Activated CD8-positive, alpha-beta T cell treated with anti-CD3 and anti-CD28 coated beads for 36 hours (primary cell): ENCODE measurements at regions of chr1 and their contacts with region 1.

Region 1: DNA sequence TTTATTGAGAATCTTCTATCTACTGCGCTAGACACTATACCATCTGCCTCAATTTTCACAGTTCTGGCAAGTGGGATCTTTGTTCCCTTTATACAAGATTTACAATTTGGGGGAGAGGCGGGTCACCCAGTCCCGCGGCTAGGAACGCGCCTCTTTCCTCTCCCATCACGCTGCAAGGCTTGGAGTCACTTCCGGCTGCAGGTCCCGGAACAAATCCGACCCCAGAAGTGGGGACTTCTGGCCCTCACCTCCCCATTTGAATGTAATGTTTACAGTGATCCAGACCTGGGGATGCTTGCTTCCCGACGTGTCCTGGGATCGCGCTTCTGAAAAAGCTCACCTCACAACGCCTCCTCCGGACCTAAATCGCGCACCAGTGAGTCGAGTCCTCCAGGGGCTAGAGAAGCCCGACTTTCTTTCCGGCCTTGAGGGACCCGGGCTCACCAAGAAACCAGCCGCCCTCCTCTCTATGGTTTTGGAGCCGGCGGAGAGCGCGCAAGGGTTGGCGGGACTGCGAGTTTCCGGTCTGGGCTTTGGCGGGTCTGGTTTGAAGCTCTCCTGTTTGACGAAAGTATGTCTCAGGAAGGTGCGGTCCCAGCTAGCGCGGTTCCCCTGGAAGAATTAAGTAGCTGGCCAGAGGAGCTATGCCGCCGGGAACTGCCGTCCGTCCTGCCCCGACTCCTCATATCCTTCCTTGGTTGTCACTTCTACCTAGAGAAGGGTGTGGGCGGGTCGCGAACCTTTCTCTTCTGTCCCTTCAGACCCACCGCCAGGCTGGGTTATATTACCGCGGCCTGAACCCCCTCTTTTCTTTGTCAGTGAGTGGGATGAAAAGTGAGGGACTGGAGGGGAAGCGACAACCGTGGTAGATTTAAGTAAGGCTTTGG is at the start of gene METTL18:
- DNase-seq: peak; percentile 96
- ATAC-seq: peak; percentile 98
- H3K4me3 Mint-ChIP-seq: peak within 1 kb of the TSS; percentile 89
- H3K27ac Mint-ChIP-seq: peak within 1 kb of the TSS; percentile 98
- H3K4me1 Mint-ChIP-seq: peaks cover 45% of the 10 kb centered on the region
- H3K27me3 Mint-ChIP-seq: no peaks in the 10 kb centered on the region
- CTCF ChIP-seq: peak; percentile 49
- total RNA-seq, gene METTL18: 8.7 to 10.8 TPM

Region 2: DNA sequence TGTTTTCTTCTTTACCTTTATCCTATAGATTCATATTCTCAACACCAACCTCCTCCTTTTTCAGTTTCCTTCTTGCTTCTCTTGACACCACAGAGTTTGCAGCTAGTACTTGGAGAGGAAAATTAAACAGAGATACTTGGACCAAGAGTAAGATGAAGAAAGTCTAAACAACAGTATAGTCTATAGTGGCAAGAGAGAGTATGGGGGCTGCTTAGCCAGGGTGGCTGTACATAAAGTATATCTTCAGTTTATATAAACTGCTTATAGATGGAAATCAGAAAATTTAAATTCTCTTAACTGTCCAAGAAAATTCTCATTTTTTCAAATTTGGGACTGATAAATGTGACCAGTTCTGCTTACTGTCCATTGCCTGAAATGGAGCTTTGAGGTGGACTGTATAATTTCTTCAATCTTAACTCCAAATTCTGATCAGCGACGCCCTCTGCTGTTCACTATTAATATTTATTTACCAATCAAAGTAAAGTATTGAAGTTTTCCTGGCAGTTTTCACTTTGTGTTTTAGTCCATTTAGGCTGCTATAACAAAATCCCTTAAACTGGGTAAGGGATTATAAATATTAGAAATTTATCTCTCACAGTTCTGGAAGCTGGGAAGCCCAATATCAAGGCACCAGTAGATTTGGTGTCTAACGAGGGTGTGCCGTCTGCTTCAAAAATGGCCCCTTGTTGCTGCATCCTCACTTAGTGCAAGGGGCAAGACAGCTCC is 14.8 kb after region 1 on chr1:
- CTCF ChIA-PET with region 1: interaction called, 16 read pairs
- POLR2A ChIA-PET with region 1: interaction called, 3 read pairs
- intact Hi-C with region 1: no loop called
- DNase-seq: peak; percentile 31
- ATAC-seq: no peak
- H3K4me3 Mint-ChIP-seq: no peak overlapping the region
- H3K27ac Mint-ChIP-seq: no peak overlapping the region
- H3K4me1 Mint-ChIP-seq: no peaks in the 10 kb centered on the region
- H3K27me3 Mint-ChIP-seq: no peaks in the 10 kb centered on the region
- CTCF ChIP-seq: peak; percentile 68

Region 3: GRCh38 chr1:169893494-169894362 is 99.0 kb after region 1 on chr1 and contains the start of gene SCYL3:
- CTCF ChIA-PET with region 1: interaction called, 4 read pairs
- POLR2A ChIA-PET with region 1: interaction called, 11 read pairs
- intact Hi-C with region 1: loop called (anchors 10 kb)
- DNase-seq: peak; percentile 93
- ATAC-seq: peak; percentile 86
- H3K4me3 Mint-ChIP-seq: peak within 1 kb of the TSS; percentile 70
- H3K27ac Mint-ChIP-seq: peak within 1 kb of the TSS; percentile 98
- H3K4me1 Mint-ChIP-seq: peaks cover 38% of the 10 kb centered on the region
- H3K27me3 Mint-ChIP-seq: no peaks in the 10 kb centered on the region
- CTCF ChIP-seq: no peak
- total RNA-seq, gene SCYL3: 7.7 to 8.4 TPM